Activated CD4-positive, alpha-beta T cell treated with anti-CD3 and anti-CD28 coated beads for 36 hours (primary cell): ENCODE measurements at regions of chr3 and their contacts with region 1.

Region 1: GRCh38 chr3:196942226-196942914 is at the start of gene NCBP2:
- DNase-seq: peak; percentile 100
- ATAC-seq: peak; percentile 97
- H3K4me3 Mint-ChIP-seq: peak within 1 kb of the TSS; percentile 93
- H3K27ac Mint-ChIP-seq: peak within 1 kb of the TSS; percentile 99
- H3K4me1 Mint-ChIP-seq: peaks cover 45% of the 10 kb centered on the region
- H3K27me3 Mint-ChIP-seq: no peaks in the 10 kb centered on the region
- total RNA-seq, gene NCBP2: 94.8 to 107 TPM

Region 2: DNA sequence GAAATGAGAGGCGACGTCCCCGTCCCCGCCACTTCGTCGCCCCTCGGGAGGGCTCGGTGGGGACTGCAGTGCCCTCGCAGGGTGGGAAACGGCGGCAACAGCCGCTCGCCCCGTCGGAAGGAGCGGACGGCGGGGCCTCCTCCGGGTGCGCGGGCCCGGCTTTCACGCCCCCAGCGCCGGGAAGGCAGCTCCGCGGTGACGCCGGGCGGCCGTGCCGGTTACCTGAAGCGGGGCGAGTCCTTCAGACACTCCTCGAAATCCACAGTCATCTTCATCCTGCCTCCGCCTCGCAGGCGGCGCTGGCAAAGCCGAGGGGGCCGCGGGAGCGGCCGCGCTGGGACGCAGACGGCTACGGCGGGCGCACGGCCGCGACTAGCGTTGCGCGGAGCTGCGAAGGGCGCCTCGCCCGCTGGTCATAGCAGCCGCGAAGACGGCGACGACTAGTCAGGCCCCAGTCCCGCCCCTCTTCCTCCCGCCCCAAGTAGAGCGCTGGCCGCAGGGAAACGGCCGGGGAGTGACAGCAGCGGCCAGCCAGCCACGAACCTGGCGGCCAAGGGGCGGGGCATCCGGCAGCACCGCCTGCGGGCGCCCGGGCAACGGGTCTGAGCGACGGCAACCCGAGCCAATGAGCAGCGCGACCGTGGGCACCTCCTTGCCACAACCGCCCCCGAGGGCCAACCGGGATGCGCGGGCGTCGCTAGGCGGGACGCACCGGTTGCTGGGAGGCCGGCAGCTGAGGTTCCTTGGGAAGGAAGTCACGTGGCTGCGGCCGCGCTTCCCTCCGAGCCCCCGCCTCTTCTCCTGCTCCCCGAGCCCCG is 1499.6 kb before region 1 on chr3 and contains the start of gene ACAP2:
- CTCF ChIA-PET with region 1: no interaction called
- POLR2A ChIA-PET with region 1: no interaction called
- intact Hi-C with region 1: loop called in 1 of 2 experiments (anchors 5 kb)
- DNase-seq: peak; percentile 99
- ATAC-seq: peak; percentile 96
- H3K4me3 Mint-ChIP-seq: peak within 1 kb of the TSS; percentile 96
- H3K27ac Mint-ChIP-seq: peak within 1 kb of the TSS; percentile 91
- H3K4me1 Mint-ChIP-seq: peaks cover 44% of the 10 kb centered on the region
- H3K27me3 Mint-ChIP-seq: no peaks in the 10 kb centered on the region
- total RNA-seq, gene ACAP2: 43.7 to 51.9 TPM

Region 3: DNA sequence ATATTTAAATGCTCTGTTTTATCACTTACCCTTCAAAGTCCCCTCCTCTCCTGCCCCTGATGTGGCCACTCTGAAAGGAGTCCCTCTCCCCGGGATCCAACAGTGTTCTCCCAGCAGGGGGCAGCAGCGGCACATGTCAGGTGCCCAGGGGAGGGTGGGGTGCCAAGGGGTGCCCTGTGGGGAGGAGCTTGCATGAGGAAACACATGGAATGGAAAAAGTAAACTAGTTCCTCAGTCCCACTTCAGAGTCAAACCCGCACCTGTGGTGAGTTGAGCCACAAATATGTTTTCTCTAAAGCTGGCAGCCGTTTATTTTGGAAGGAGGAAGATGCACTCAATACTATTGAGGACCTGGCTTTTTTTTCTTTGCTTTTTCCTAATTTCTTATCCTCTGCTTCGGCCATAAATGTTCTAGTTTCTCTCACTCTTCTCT is 333.0 kb before region 1 on chr3:
- CTCF ChIA-PET with region 1: interaction called, 4 read pairs
- POLR2A ChIA-PET with region 1: no interaction called
- intact Hi-C with region 1: loop called in 1 of 2 experiments (anchors 10 kb)
- DNase-seq: peak; percentile 98
- ATAC-seq: peak; percentile 93
- H3K4me3 Mint-ChIP-seq: peak overlapping the region; percentile 39
- H3K27ac Mint-ChIP-seq: peak overlapping the region; percentile 76
- H3K4me1 Mint-ChIP-seq: peaks cover 28% of the 10 kb centered on the region
- H3K27me3 Mint-ChIP-seq: no peaks in the 10 kb centered on the region

Region 4: DNA sequence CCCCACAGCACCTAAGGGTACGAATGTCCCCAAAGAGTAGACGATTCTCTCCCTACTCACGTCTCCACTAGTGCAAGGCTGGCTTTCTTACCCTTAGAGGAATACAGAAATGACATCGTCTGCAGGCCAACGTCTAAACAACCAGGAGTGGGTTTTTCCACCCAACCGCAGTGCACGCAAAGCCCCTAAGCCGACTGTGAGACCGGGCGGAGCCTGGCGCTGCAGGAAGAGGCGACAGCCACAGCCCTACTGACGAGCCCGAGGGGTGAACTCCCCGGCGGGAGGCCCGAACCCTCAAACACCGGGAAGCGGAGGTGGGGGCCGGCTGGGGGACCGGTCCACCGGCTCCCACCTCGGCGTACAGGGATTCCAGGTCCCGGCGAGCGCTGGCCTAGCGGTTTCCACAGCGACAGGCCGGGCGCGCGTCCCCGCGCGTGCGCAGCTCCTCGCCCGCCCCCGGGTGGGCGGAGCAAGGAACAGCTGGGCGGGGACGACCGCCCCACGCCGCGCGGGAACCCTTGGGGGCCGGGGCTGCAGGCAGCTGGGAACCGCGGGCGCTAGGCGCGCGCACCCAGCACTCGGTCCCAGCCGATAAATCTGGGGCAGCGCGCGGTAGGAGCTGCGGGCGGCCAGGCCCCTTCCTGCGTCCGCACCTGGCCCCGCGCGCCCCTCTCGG is 230.4 kb before region 1 on chr3 and contains the starts of genes CEP19 and PIGX:
- CTCF ChIA-PET with region 1: no interaction called
- POLR2A ChIA-PET with region 1: no interaction called
- intact Hi-C with region 1: loop called in 1 of 2 experiments (anchors 1 kb)
- DNase-seq: peak; percentile 94
- ATAC-seq: peak; percentile 87
- H3K4me3 Mint-ChIP-seq: peak within 1 kb of the TSS; percentile 83
- H3K27ac Mint-ChIP-seq: peak within 1 kb of the TSS; percentile 96
- H3K4me1 Mint-ChIP-seq: peaks cover 33% of the 10 kb centered on the region
- H3K27me3 Mint-ChIP-seq: no peaks in the 10 kb centered on the region
- total RNA-seq, gene CEP19: 4.7 to 5.6 TPM
- total RNA-seq, gene PIGX: 37.8 to 42.2 TPM

Region 5: GRCh38 chr3:196837819-196838420 is 104.5 kb before region 1 on chr3:
- CTCF ChIA-PET with region 1: interaction called, 17 read pairs
- POLR2A ChIA-PET with region 1: interaction called, 3 read pairs
- intact Hi-C with region 1: no loop called
- DNase-seq: peak; percentile 87
- ATAC-seq: peak; percentile 94
- H3K4me3 Mint-ChIP-seq: no peak overlapping the region
- H3K27ac Mint-ChIP-seq: no peak overlapping the region
- H3K4me1 Mint-ChIP-seq: no peaks in the 10 kb centered on the region
- H3K27me3 Mint-ChIP-seq: no peaks in the 10 kb centered on the region

Region 6: GRCh38 chr3:196920733-196921132 is 21.6 kb before region 1 on chr3:
- CTCF ChIA-PET with region 1: no interaction called
- POLR2A ChIA-PET with region 1: no interaction called
- intact Hi-C with region 1: no loop called
- DNase-seq: no peak
- ATAC-seq: no peak
- H3K4me3 Mint-ChIP-seq: no peak overlapping the region
- H3K27ac Mint-ChIP-seq: no peak overlapping the region
- H3K4me1 Mint-ChIP-seq: no peaks in the 10 kb centered on the region
- H3K27me3 Mint-ChIP-seq: no peaks in the 10 kb centered on the region

Region 7: GRCh38 chr3:196969660-196970546 is 27.5 kb after region 1 on chr3:
- CTCF ChIA-PET with region 1: no interaction called
- POLR2A ChIA-PET with region 1: no interaction called
- intact Hi-C with region 1: loop called (anchors 1 kb)
- DNase-seq: peak; percentile 80
- ATAC-seq: peak; percentile 65
- H3K4me3 Mint-ChIP-seq: peak overlapping the region; percentile 63
- H3K27ac Mint-ChIP-seq: peak overlapping the region; percentile 31
- H3K4me1 Mint-ChIP-seq: peaks cover 15% of the 10 kb centered on the region
- H3K27me3 Mint-ChIP-seq: peaks cover 11% of the 10 kb centered on the region

Region 8: DNA sequence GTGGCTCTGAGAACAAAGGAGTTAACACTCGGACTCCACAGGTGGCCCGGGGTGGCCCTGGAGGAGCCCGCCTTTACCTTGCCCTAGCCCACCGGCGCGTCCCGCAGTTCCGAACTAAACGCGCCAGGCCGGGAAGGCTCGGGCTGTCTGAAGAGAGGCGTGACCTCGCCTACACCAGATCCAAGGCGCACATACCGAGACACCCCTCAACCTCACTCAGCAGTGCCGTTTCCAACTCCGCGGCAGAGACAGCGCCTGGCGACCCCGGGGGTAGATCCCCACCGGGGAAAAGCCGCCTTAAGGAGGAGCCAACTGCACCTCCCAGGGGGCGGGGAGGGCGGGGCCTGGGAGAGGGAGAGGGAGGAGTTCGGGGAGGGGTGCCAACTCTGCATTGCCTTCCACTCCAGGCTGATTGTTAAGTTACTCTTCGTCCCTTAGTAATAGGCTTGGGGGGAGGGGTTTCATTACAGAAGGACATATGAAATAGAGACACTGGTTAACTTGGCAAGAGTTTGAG is 356.0 kb after region 1 on chr3 and contains the start of gene DLG1:
- CTCF ChIA-PET with region 1: no interaction called
- POLR2A ChIA-PET with region 1: no interaction called
- intact Hi-C with region 1: loop called in 1 of 2 experiments (anchors 1 kb)
- DNase-seq: peak; percentile 93
- ATAC-seq: peak; percentile 81
- H3K4me3 Mint-ChIP-seq: peak within 1 kb of the TSS; percentile 92
- H3K27ac Mint-ChIP-seq: peak within 1 kb of the TSS; percentile 93
- H3K4me1 Mint-ChIP-seq: peaks cover 23% of the 10 kb centered on the region
- H3K27me3 Mint-ChIP-seq: peaks cover 20% of the 10 kb centered on the region
- total RNA-seq, gene DLG1: 58.8 to 78.4 TPM